Activated naive CD8-positive, alpha-beta T cell treated with anti-CD3 and anti-CD28 coated beads, Interleukin-2, amount 10 ng/mL, durations not matched to agents 7 days and 5 days (primary cell): ENCODE measurements at regions of chr11 and their contacts with region 1.

Region 1: GRCh38 chr11:63536669-63537292 is at the start of gene PLAAT4:
- DNase-seq: peak; percentile 56
- ATAC-seq: peak; percentile 62
- H3K4me3 Mint-ChIP-seq: peak within 1 kb of the TSS; percentile 91
- H3K27ac Mint-ChIP-seq: peak within 1 kb of the TSS; percentile 90
- H3K4me1 Mint-ChIP-seq: peaks cover 59% of the 10 kb centered on the region
- H3K27me3 Mint-ChIP-seq: no peaks in the 10 kb centered on the region
- total RNA-seq, gene PLAAT4: 156 to 158 TPM

Region 2: GRCh38 chr11:63518548-63518947 is 18.2 kb before region 1 on chr11:
- POLR2A ChIA-PET with region 1: no interaction called
- DNase-seq: no peak
- ATAC-seq: no peak
- H3K4me3 Mint-ChIP-seq: no peak overlapping the region
- H3K27ac Mint-ChIP-seq: peak overlapping the region; percentile 14
- H3K4me1 Mint-ChIP-seq: peaks cover 7% of the 10 kb centered on the region
- H3K27me3 Mint-ChIP-seq: peaks cover 4% of the 10 kb centered on the region

Region 3: DNA sequence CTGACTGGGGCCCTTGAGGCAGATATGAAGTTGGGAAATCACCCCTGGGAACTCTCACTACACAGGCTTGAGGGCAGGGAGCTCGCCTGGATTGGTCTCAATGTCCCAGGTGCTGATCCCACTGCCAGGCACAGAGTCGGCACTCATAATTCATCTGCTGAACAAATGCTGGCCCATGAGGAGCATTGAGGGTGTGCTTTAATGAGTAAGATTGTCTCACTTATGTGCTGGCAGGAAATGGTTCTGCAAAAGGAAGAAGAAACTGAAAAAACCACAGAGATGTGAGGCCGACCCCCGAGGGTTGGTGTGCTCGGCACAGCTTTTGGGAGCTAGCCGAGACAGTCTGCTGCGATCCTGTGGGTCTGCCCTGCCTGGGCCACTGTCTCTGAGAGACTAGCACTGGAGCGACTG is 17.0 kb after region 1 on chr11:
- POLR2A ChIA-PET with region 1: interaction called, 147 read pairs
- DNase-seq: peak; percentile 59
- ATAC-seq: peak; percentile 77
- H3K4me3 Mint-ChIP-seq: peak overlapping the region; percentile 84
- H3K27ac Mint-ChIP-seq: peak overlapping the region; percentile 100
- H3K4me1 Mint-ChIP-seq: peaks cover 48% of the 10 kb centered on the region
- H3K27me3 Mint-ChIP-seq: no peaks in the 10 kb centered on the region

Region 4: DNA sequence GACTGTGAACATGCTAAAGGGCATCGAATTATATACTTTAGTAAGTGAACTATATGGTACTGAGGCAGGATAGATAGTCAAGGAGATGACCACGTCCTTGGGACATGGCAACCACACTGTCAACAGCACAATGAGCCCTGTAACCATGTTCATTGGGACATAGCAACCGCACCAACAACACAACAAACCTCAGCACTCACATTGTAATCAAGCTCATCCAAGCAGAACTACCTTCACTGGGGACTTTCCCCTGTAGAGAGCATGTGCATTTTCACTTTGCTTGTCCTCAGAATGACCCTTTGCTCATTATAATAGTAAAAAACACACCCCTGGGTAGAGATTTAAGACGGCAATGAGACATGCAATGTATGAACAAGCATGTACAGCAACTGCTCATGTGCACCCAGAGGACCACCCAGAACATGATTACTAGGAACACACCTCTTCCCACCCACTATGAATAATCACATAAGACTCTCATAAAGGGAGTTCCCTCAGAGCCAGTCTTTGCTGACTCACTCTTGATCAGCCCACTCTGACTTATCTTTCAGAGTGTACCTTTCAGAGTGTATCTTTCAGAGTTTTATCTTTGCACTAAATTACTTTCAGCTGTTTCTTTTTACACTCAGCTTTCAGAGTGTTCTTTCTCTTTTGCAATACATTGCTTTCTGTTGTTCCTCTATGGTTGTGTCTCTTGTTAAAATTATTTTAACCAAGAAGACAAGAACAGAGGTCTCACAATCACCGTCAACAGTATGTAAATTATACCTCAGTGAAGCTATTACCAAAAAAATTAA is 30.5 kb after region 1 on chr11:
- POLR2A ChIA-PET with region 1: interaction called, 17 read pairs
- DNase-seq: no peak
- ATAC-seq: peak; percentile 69
- H3K4me3 Mint-ChIP-seq: peak overlapping the region; percentile 46
- H3K27ac Mint-ChIP-seq: peak overlapping the region; percentile 8
- H3K4me1 Mint-ChIP-seq: peaks cover 42% of the 10 kb centered on the region
- H3K27me3 Mint-ChIP-seq: peaks cover 4% of the 10 kb centered on the region

Region 5: GRCh38 chr11:63573881-63574855 is 37.4 kb after region 1 on chr11:
- POLR2A ChIA-PET with region 1: interaction called, 12 read pairs
- DNase-seq: peak; percentile 51
- ATAC-seq: peak; percentile 95
- H3K4me3 Mint-ChIP-seq: peak overlapping the region; percentile 80
- H3K27ac Mint-ChIP-seq: peak overlapping the region; percentile 96
- H3K4me1 Mint-ChIP-seq: peaks cover 21% of the 10 kb centered on the region
- H3K27me3 Mint-ChIP-seq: peaks cover 4% of the 10 kb centered on the region

Region 6: GRCh38 chr11:63589000-63589399 is 52.2 kb after region 1 on chr11:
- POLR2A ChIA-PET with region 1: no interaction called
- DNase-seq: no peak
- ATAC-seq: no peak
- H3K4me3 Mint-ChIP-seq: no peak overlapping the region
- H3K27ac Mint-ChIP-seq: no peak overlapping the region
- H3K4me1 Mint-ChIP-seq: peaks cover 6% of the 10 kb centered on the region
- H3K27me3 Mint-ChIP-seq: no peaks in the 10 kb centered on the region

Region 7: DNA sequence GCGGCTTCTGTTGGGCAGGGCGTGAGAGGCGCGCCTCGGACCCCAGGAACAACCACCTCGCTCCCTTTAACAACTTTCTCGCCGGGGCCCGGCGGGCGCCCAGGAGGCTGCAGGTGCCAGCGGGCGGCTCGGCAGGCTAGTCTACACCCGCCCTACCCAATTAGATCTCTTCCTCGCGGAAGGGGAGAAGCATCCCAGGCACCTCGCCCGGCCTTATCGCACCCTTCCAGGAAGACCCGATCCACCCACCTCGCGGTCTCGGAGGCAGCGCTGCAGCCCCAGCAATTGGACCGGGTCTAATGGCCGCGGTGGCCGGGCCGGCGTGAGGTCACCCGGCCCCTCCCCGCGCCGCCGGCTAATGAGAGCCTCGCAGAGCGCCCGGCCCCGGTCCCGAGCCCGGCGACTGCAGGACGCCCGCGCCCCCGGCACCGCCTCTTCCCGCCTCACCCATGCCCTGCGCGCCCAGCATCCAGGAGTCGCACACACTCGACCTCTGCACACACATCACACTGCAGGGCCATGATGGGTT is 77.4 kb after region 1 on chr11 and contains the start of gene PLAAT3:
- POLR2A ChIA-PET with region 1: interaction called, 11 read pairs
- DNase-seq: peak; percentile 68
- ATAC-seq: peak; percentile 73
- H3K4me3 Mint-ChIP-seq: peak within 1 kb of the TSS; percentile 87
- H3K27ac Mint-ChIP-seq: peak within 1 kb of the TSS; percentile 80
- H3K4me1 Mint-ChIP-seq: peaks cover 10% of the 10 kb centered on the region
- H3K27me3 Mint-ChIP-seq: no peaks in the 10 kb centered on the region
- total RNA-seq, gene PLAAT3: 15.8 to 17.3 TPM